ENCODE measurements at regions of chr1 and their contacts with region 1.

Region 1: GRCh38 chr1:88897070-88897730 is 5.8 kb upstream of the GTF2B start:
- DNase-seq: no peak
- H3K4me3 ChIP-seq: no peak overlapping the region
- H3K27ac ChIP-seq: no peak overlapping the region
- H3K4me1 ChIP-seq: peaks cover 7% of the 10 kb centered on the region
- H3K27me3 ChIP-seq: no peaks in the 10 kb centered on the region
- CTCF ChIP-seq: no peak

Region 2: DNA sequence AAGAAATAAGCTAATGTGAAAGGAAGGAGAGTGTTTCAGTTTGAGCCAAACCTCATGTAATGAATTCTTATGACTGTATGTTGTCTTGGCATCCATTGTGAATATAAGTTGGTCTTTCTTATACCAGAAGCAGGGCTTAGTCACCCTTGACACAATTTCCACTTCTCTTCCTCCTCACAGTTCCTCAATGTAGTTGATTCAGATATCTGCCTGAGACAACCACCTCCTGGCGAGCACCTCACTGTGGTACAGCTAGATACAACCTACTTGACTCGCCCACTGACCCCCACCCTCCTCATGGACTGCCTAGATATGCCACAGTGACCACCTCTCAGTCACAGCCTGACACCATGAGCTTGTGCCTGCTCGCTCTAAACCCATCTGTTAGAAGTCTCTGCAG is 49.7 kb after region 1 on chr1:
- CTCF ChIA-PET with region 1: no interaction called
- POLR2A ChIA-PET with region 1: interaction called, 15 read pairs
- intact Hi-C with region 1: no loop called
- DNase-seq: no peak
- H3K4me3 ChIP-seq: no peak overlapping the region
- H3K27ac ChIP-seq: no peak overlapping the region
- H3K4me1 ChIP-seq: no peaks in the 10 kb centered on the region
- H3K27me3 ChIP-seq: no peaks in the 10 kb centered on the region
- CTCF ChIP-seq: no peak

Measured in PC-9 (cell line).